Dendritic cell treated with granulocyte-macrophage colony-stimulating factor and Interleukin-4, amounts not matched to agents 40 ng/mL and 50 ng/mL, for 4 days (primary cell): ENCODE measurements at regions of chr16 and their contacts with region 1.

Region 1: GRCh38 chr16:58684354-58685083 is at the start of gene SLC38A7:
- H3K4me3 Mint-ChIP-seq: peak within 1 kb of the TSS; percentile 84
- H3K27ac Mint-ChIP-seq: peak within 1 kb of the TSS; percentile 88
- H3K4me1 Mint-ChIP-seq: peaks cover 45% of the 10 kb centered on the region
- H3K27me3 Mint-ChIP-seq: no peaks in the 10 kb centered on the region

Region 2: DNA sequence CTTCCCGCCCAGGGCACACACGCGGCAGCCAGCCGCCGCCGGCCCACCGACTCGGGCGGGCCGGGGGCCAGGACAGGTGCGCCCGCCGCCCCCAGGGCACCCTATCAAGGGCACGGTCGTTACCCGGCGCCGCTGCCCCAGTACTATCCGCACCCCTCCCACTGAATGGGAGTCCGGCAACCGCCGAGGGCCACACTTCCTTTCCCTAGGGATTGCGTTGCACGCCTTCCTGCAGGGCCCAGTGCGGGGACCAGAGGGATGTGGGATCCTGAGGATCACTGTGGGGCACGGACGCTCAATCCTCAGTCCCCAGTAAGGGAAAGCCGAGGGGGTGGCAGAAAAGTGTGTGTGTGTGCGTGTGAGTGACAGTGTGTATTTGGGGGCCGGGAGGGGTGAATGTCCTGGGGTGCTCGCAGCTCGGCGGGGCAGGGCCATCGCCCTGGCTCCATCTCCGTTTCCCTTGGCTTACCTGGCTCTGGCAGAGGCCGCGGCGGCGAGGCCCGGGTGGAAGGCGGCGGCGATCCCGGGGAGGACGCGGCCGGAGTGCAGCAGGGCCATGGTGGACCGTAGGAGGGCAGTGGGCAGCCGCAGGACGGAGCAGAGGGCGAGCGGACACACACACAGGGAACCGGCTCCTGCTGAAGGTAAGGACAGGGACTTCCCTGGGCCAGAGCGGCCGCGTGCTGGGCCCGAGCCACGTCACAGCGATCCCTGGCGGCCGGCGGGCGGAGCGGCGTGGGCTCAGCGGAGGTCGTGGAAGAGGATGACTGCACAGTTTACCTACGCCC is 49.3 kb after region 1 on chr16 and contains the start of gene GOT2:
- intact Hi-C with region 1: loop called (anchors 5 kb)
- H3K4me3 Mint-ChIP-seq: peak within 1 kb of the TSS; percentile 93
- H3K27ac Mint-ChIP-seq: peak within 1 kb of the TSS; percentile 81
- H3K4me1 Mint-ChIP-seq: peaks cover 15% of the 10 kb centered on the region
- H3K27me3 Mint-ChIP-seq: peaks cover 6% of the 10 kb centered on the region

Region 3: GRCh38 chr16:58755989-58756649 is 71.6 kb after region 1 on chr16:
- intact Hi-C with region 1: loop called (anchors 5 kb)
- H3K4me3 Mint-ChIP-seq: peak overlapping the region; percentile 32
- H3K27ac Mint-ChIP-seq: peak overlapping the region; percentile 63
- H3K4me1 Mint-ChIP-seq: peaks cover 10% of the 10 kb centered on the region
- H3K27me3 Mint-ChIP-seq: peaks cover 8% of the 10 kb centered on the region